ENCODE measurements at regions of chr2 and their contacts with region 1.

Region 1: DNA sequence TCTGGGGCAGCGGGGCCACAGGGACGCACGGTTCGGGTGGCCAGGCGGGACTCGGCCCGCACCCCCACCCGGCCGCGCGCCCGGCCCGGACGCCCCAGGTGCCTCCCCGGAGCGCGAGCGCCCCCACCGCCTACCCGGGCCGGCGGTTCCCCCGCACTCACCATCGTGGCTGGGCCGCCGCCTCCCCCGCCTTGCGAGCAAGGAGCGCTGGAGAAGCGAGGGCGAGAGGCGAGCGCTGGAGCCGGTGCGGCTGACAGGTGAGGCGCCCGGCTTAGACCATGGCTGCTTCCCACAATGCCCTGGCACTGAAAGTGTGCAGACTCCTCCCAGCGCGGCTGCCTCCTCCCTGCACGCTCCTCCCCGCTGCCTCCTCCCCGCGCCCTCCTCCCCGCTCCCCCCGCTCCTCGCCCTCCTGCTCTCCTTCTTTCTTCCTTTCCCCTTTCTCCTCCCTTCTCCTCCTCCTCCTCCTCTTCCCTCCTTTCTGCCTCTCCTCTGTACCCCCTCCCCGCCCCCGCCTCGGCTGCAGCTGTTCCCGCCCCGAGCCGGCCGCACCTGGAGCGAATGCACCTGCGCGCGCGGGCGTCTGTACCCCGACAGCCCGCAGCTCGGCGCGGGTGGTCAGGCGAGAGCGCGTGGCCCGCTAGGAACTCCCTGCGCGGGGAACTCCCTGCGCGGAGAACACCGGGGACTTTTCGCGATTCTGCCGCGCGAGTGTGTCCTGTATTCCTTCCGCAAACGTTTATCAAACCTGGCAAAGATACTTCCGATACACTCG is at the start of gene AP1S3:
- DNase-seq: peak; percentile 94
- ATAC-seq: peak; percentile 68
- H3K4me3 ChIP-seq: peak within 1 kb of the TSS; percentile 70 to 83 (median 73)
- H3K4me3 Mint-ChIP-seq: peak within 1 kb of the TSS; percentile 97
- H3K27ac ChIP-seq: peak within 1 kb of the TSS; percentile 93
- H3K27ac Mint-ChIP-seq: peak within 1 kb of the TSS; percentile 95
- H3K4me1 ChIP-seq: peaks cover 28 to 45% of the 10 kb centered on the region in 2 donors
- H3K4me1 Mint-ChIP-seq: peaks cover 53% of the 10 kb centered on the region
- H3K27me3 ChIP-seq: no peaks in the 10 kb centered on the region
- H3K27me3 Mint-ChIP-seq: no peaks in the 10 kb centered on the region
- CTCF ChIP-seq: no peak
- total RNA-seq, gene AP1S3: 41.4 and 50.7 TPM in 2 replicates

Region 2: GRCh38 chr2:223779877-223780276 is 57.6 kb before region 1 on chr2:
- CTCF ChIA-PET with region 1: interaction called, 3 read pairs
- POLR2A ChIA-PET with region 1: no interaction called
- intact Hi-C with region 1: loop called (anchors 1 kb)
- DNase-seq: peak; percentile 79
- ATAC-seq: peak; percentile 78
- H3K4me3 ChIP-seq: no peak overlapping the region
- H3K4me3 Mint-ChIP-seq: no peak overlapping the region
- H3K27ac ChIP-seq: no peak overlapping the region
- H3K27ac Mint-ChIP-seq: peak overlapping the region; percentile 37
- H3K4me1 ChIP-seq: no peaks in the 10 kb centered on the region
- H3K4me1 Mint-ChIP-seq: peaks cover 8% of the 10 kb centered on the region
- H3K27me3 ChIP-seq: no peaks in the 10 kb centered on the region
- H3K27me3 Mint-ChIP-seq: no peaks in the 10 kb centered on the region
- CTCF ChIP-seq: peak; percentile 67

Region 3: DNA sequence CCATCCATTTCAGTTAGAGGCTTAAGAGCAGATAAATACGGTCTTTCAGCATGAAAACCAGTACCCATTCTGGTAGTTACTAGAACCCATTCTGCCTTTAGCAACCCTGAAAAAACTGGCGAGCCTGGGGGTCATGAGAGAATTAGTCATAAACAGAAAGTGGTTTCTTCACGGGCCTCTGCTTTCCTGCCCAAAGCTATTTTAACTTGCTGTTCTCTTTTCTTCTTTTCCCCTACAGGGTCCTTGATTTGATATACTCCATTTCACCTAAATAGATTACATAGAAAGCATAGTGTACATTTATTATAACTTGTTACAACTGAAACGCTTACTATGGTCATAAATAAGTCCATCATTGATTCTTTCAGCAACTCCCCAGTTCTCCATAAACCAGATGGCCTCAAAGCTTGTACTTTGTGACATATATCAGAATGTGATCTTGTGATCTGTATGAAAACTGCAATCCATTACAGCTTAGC is 59.4 kb after region 1 on chr2:
- CTCF ChIA-PET with region 1: interaction called, 6 read pairs
- POLR2A ChIA-PET with region 1: interaction called, 8 read pairs
- intact Hi-C with region 1: loop called (anchors 1 kb)
- DNase-seq: peak; percentile 74
- ATAC-seq: peak; percentile 44
- H3K4me3 ChIP-seq: peak overlapping the region in 3 of 5 experiments; percentile 22 to 27 (median 25)
- H3K4me3 Mint-ChIP-seq: peak overlapping the region; percentile 86
- H3K27ac ChIP-seq: peak overlapping the region; percentile 90 to 91
- H3K27ac Mint-ChIP-seq: peak overlapping the region; percentile 93
- H3K4me1 ChIP-seq: peaks cover 56 to 57% of the 10 kb centered on the region in 2 donors
- H3K4me1 Mint-ChIP-seq: peaks cover 67% of the 10 kb centered on the region
- H3K27me3 ChIP-seq: no peaks in the 10 kb centered on the region
- H3K27me3 Mint-ChIP-seq: no peaks in the 10 kb centered on the region
- CTCF ChIP-seq: no peak

Region 4: GRCh38 chr2:224025874-224026273 is 188.4 kb after region 1 on chr2:
- CTCF ChIA-PET with region 1: no interaction called
- POLR2A ChIA-PET with region 1: no interaction called
- intact Hi-C with region 1: loop called (anchors 2 kb)
- DNase-seq: peak; percentile 90
- ATAC-seq: peak; percentile 97
- H3K4me3 ChIP-seq: peak overlapping the region in 2 of 5 experiments; percentile 2 to 40
- H3K4me3 Mint-ChIP-seq: peak overlapping the region; percentile 57
- H3K27ac ChIP-seq: peak overlapping the region; percentile 43 to 44
- H3K27ac Mint-ChIP-seq: peak overlapping the region; percentile 74
- H3K4me1 ChIP-seq: peaks cover 36% of the 10 kb centered on the region in 2 donors
- H3K4me1 Mint-ChIP-seq: peaks cover 40% of the 10 kb centered on the region
- H3K27me3 ChIP-seq: no peaks in the 10 kb centered on the region
- H3K27me3 Mint-ChIP-seq: no peaks in the 10 kb centered on the region
- CTCF ChIP-seq: no peak

Region 5: DNA sequence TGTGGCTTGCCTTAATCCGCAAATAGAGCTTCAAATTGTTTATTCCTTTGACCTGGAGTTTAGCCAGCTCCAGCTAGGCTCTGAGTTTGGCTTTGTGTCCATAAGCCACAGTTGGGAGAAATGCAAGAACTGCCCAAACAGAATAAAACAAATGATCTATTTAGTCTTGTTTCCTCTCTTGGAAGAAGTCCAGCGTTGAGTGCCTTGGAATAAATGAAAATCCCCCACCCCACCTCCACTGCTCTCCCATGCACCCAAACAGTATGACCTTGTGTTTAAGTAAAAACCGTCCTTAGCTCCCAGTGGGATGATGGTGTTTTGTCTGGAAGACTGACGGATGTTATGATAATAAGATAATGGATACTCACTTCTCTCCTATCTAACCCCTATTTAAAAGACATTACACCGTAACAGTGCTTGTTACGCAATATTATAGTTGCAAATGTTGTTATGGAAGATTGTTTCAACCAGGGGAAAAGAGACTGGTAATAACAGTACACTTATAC is 204.8 kb after region 1 on chr2:
- CTCF ChIA-PET with region 1: no interaction called
- POLR2A ChIA-PET with region 1: no interaction called
- intact Hi-C with region 1: no loop called
- DNase-seq: no peak
- ATAC-seq: no peak
- H3K4me3 ChIP-seq: no peak overlapping the region
- H3K4me3 Mint-ChIP-seq: no peak overlapping the region
- H3K27ac ChIP-seq: no peak overlapping the region
- H3K27ac Mint-ChIP-seq: no peak overlapping the region
- H3K4me1 ChIP-seq: peaks cover 13 to 16% of the 10 kb centered on the region in 2 donors
- H3K4me1 Mint-ChIP-seq: peaks cover 18% of the 10 kb centered on the region
- H3K27me3 ChIP-seq: peaks cover 0 to 42% (median 10%) of the 10 kb centered on the region in 4 experiments
- H3K27me3 Mint-ChIP-seq: peaks cover 47% of the 10 kb centered on the region
- CTCF ChIP-seq: no peak

Region 6: GRCh38 chr2:224436634-224437033 is 599.2 kb after region 1 on chr2:
- CTCF ChIA-PET with region 1: no interaction called
- POLR2A ChIA-PET with region 1: no interaction called
- intact Hi-C with region 1: no loop called
- DNase-seq: no peak
- ATAC-seq: no peak
- H3K4me3 ChIP-seq: no peak overlapping the region
- H3K4me3 Mint-ChIP-seq: no peak overlapping the region
- H3K27ac ChIP-seq: no peak overlapping the region
- H3K27ac Mint-ChIP-seq: no peak overlapping the region
- H3K4me1 ChIP-seq: no peaks in the 10 kb centered on the region
- H3K4me1 Mint-ChIP-seq: peaks cover 4% of the 10 kb centered on the region
- H3K27me3 ChIP-seq: peaks cover 0 to 10% (median 7%) of the 10 kb centered on the region in 4 experiments
- H3K27me3 Mint-ChIP-seq: peaks cover 29% of the 10 kb centered on the region
- CTCF ChIP-seq: no peak

Region 7: DNA sequence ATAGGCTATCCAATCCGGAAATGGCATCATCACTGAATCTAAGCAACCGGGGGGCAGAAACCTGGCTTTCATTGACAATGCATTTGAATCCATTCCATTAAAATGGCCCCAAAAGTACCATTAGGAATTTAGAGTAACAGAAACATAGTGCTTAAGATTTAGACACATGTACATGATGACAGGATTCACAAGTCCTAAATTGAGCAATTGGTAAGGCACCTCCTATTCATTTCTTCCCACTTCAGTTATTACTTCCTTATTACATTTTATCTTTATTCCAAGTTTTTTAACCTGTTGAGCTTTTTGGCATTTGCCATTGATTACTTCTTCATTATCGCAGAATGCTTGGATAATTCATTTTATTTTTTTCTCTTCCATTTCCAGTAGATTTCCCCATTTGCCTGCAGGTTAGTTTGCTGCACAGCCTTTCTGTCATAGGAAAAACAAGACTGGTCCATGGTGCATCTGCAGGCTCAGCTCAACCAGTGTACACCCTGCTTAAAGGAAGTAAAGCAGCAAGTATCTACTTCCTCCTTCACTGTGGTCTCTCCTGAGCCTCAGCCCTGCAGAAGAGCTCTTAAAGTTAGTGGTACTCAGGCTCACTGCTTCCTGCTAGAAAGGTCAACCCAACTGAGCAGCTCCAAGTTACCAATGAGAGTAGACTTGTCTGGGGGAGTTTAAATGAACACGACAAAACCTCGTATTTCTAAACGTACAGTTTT is 1115.6 kb after region 1 on chr2:
- CTCF ChIA-PET with region 1: no interaction called
- POLR2A ChIA-PET with region 1: no interaction called
- intact Hi-C with region 1: loop called (anchors 10 kb)
- DNase-seq: peak; percentile 79
- ATAC-seq: peak; percentile 89
- H3K4me3 ChIP-seq: no peak overlapping the region
- H3K4me3 Mint-ChIP-seq: peak overlapping the region; percentile 50
- H3K27ac ChIP-seq: peak overlapping the region; percentile 19 to 52
- H3K27ac Mint-ChIP-seq: peak overlapping the region; percentile 85
- H3K4me1 ChIP-seq: peaks cover 63 to 64% of the 10 kb centered on the region in 2 donors
- H3K4me1 Mint-ChIP-seq: peaks cover 86% of the 10 kb centered on the region
- H3K27me3 ChIP-seq: no peaks in the 10 kb centered on the region
- H3K27me3 Mint-ChIP-seq: no peaks in the 10 kb centered on the region
- CTCF ChIP-seq: no peak